Natural killer cell (primary cell): ENCODE measurements at regions of chr3 and their contacts with region 1.

Region 1: GRCh38 chr3:196609343-196609775 is 30.1 kb upstream of the NRROS start:
- DNase-seq: peak; percentile 88 to 94
- ATAC-seq: peak; percentile 86 to 96 (median 88)
- H3K4me3 ChIP-seq: no peak overlapping the region
- H3K4me3 Mint-ChIP-seq: peak overlapping the region; percentile 76
- H3K27ac ChIP-seq: peak overlapping the region; percentile 50
- H3K27ac Mint-ChIP-seq: peak overlapping the region; percentile 83 to 88
- H3K4me1 ChIP-seq: peaks cover 47% of the 10 kb centered on the region
- H3K4me1 Mint-ChIP-seq: peaks cover 43 to 45% of the 10 kb centered on the region in 2 donors
- H3K27me3 ChIP-seq: no peaks in the 10 kb centered on the region
- H3K27me3 Mint-ChIP-seq: no peaks in the 10 kb centered on the region
- CTCF ChIP-seq: peak; percentile 99

Region 2: GRCh38 chr3:194930377-194931204 is 1678.8 kb before region 1 on chr3:
- intact Hi-C with region 1: no loop called
- DNase-seq: no peak
- ATAC-seq: no peak
- H3K4me3 ChIP-seq: no peak overlapping the region
- H3K4me3 Mint-ChIP-seq: no peak overlapping the region
- H3K27ac ChIP-seq: no peak overlapping the region
- H3K27ac Mint-ChIP-seq: no peak overlapping the region
- H3K4me1 ChIP-seq: peaks cover 7% of the 10 kb centered on the region
- H3K4me1 Mint-ChIP-seq: no peaks in the 10 kb centered on the region
- H3K27me3 ChIP-seq: no peaks in the 10 kb centered on the region
- H3K27me3 Mint-ChIP-seq: peaks cover 8 to 12% of the 10 kb centered on the region in 2 donors
- CTCF ChIP-seq: no peak

Region 3: DNA sequence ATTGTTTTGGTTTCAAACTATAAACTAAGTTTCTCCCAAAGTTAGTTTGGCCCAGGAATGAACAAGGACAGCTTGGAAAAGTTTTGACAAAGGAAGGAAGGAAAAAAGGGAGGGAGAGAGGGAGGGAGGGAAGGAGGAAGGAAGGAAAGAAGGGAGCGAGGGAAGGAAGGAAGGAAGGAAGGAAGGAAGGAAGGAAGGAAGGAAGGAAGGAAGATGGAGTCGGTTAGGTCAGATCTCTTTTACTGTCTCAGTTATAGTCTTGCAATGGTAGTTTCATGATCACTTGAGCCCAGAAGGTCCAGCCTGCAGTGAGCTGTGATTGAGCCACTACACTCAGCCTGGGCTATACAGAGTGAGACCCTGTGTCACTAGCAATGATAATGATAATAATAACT is 164.9 kb before region 1 on chr3:
- intact Hi-C with region 1: no loop called
- DNase-seq: no peak
- ATAC-seq: no peak
- H3K4me3 ChIP-seq: no peak overlapping the region
- H3K4me3 Mint-ChIP-seq: no peak overlapping the region
- H3K27ac ChIP-seq: no peak overlapping the region
- H3K27ac Mint-ChIP-seq: no peak overlapping the region
- H3K4me1 ChIP-seq: no peaks in the 10 kb centered on the region
- H3K4me1 Mint-ChIP-seq: peaks cover 0 to 6% of the 10 kb centered on the region in 2 donors
- H3K27me3 ChIP-seq: no peaks in the 10 kb centered on the region
- H3K27me3 Mint-ChIP-seq: no peaks in the 10 kb centered on the region
- CTCF ChIP-seq: no peak

Region 4: GRCh38 chr3:196632046-196632751 is 22.8 kb after region 1 on chr3:
- intact Hi-C with region 1: loop called (anchors 1 kb)
- DNase-seq: peak; percentile 82 to 94
- ATAC-seq: peak; percentile 69 to 89 (median 85)
- H3K4me3 ChIP-seq: peak overlapping the region; percentile 51
- H3K4me3 Mint-ChIP-seq: peak overlapping the region; percentile 86
- H3K27ac ChIP-seq: peak overlapping the region; percentile 92
- H3K27ac Mint-ChIP-seq: peak overlapping the region; percentile 93 to 95
- H3K4me1 ChIP-seq: peaks cover 81% of the 10 kb centered on the region
- H3K4me1 Mint-ChIP-seq: peaks cover 75 to 76% of the 10 kb centered on the region in 2 donors
- H3K27me3 ChIP-seq: no peaks in the 10 kb centered on the region
- H3K27me3 Mint-ChIP-seq: no peaks in the 10 kb centered on the region
- CTCF ChIP-seq: no peak

Region 5: DNA sequence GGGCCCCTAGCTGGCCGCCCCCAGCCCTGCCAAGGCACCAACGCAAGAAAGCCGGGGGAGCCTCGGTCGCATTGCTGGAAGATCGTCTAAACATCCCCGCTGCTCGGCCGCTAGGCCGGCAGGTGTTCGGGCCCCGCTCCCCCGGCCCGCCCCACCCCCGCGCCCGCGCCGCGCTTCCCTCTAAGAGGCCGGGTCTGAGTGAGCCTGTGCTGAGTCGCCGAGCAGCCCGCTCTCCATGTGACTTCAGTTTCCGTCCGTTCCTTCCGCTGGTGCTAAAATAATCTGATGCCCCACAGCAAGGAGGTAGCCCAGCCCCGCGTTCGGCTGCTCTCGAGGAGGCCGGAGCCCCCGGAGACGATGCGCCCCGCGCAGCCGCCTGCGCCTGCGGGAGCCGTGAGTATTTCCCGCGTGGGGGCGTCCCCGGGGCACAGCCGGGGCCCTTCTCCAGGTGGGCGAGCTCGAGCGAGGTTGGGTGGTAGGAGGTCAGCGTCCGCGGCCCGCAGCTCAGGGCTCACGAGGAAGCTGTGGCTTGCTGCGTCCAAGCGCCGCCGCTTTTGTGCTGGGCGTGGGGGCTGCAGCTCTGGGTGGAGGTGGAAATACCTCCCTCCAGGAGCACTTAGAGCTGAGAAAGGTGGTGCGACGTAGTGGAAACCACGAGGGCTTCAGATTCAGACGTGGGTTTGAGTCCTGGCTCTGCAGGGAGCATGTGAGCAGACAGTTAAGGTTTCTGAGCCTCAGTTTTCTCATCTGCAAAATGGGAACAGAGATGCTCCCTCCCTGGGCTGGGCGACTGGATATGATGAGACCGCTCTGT is 30.3 kb after region 1 on chr3 and contains the start of gene NRROS:
- intact Hi-C with region 1: loop called (anchors 2 kb)
- DNase-seq: peak; percentile 66 to 76
- ATAC-seq: peak; percentile 37 to 79 (median 64)
- H3K4me3 ChIP-seq: peak within 1 kb of the TSS; percentile 88
- H3K4me3 Mint-ChIP-seq: peak within 1 kb of the TSS; percentile 93
- H3K27ac ChIP-seq: peak within 1 kb of the TSS; percentile 81
- H3K27ac Mint-ChIP-seq: peak within 1 kb of the TSS; percentile 96 to 98
- H3K4me1 ChIP-seq: peaks cover 89% of the 10 kb centered on the region
- H3K4me1 Mint-ChIP-seq: peaks cover 91 to 96% of the 10 kb centered on the region in 2 donors
- H3K27me3 ChIP-seq: no peaks in the 10 kb centered on the region
- H3K27me3 Mint-ChIP-seq: no peaks in the 10 kb centered on the region
- CTCF ChIP-seq: no peak
- total RNA-seq, gene NRROS: 32.5 to 56.3 (median 56.2) TPM